A549 (cell line): ENCODE measurements at regions of chr9 and their contacts with region 1.

Region 1: DNA sequence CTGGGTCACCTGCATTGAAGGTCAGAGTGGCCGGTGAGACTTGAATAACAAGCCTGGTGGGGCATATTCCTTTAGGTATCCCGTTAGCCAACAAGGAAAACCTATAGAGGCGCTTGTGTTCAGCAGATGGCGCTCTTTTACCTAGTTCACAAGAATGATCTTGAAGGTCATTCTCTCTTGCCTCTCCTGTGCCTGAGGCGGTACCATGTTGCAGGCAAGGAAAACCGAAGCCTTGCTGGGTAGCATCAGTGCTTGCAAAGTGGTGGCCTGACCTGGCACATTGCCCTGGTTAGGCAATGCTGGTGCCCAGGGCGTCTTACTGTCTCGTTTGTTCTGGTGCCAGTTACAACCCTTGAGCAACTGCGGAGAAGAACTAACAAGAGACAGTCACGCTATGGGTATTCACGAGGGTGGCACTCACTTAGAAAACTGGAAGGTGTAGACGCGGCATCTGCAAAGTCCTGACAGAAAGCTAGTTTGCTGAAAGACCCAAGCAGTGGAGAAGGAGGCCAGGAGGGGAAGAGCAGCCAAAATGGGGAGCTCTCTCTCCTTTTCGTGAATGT is 56.7 kb downstream of the AOPEP start:
- DNase-seq: peak; percentile 80 to 100
- ATAC-seq: peak; percentile 96 to 100
- H3K4me3 ChIP-seq: no peak overlapping the region
- H3K27ac ChIP-seq: peak overlapping the region; percentile 86 to 91
- H3K4me1 ChIP-seq: peaks cover 60% of the 10 kb centered on the region
- CTCF ChIP-seq: peak; percentile 88
- EP300 ChIP-seq: peak; percentile 100
- POLR2A ChIP-seq: no peak
- RAD21 ChIP-seq: peak; percentile 98 to 100

Region 2: GRCh38 chr9:94672811-94673487 is 110.2 kb before region 1 on chr9:
- CTCF ChIA-PET with region 1: interaction called, 10 read pairs
- POLR2A ChIA-PET with region 1: interaction called, 3 read pairs
- DNase-seq: peak in 1 of 2 experiments; percentile 37
- ATAC-seq: no peak
- H3K4me3 ChIP-seq: no peak overlapping the region
- H3K27ac ChIP-seq: peak overlapping the region; percentile 37 to 70; a peak in 5 of 6 replicates
- H3K4me1 ChIP-seq: peaks cover 25% of the 10 kb centered on the region; the same call in 2 of the 3 replicates
- CTCF ChIP-seq: no peak
- EP300 ChIP-seq: no peak
- POLR2A ChIP-seq: no peak
- RAD21 ChIP-seq: no peak

Region 3: GRCh38 chr9:94847486-94847885 is 64.3 kb after region 1 on chr9:
- CTCF ChIA-PET with region 1: interaction called, 10 read pairs
- POLR2A ChIA-PET with region 1: no interaction called
- DNase-seq: no peak
- ATAC-seq: peak in 1 of 2 experiments; percentile 24; a peak in 3 of 6 replicates
- H3K4me3 ChIP-seq: no peak overlapping the region
- H3K27ac ChIP-seq: peak overlapping the region; percentile 51 to 78; a peak in 5 of 6 replicates
- H3K4me1 ChIP-seq: peaks cover 28% of the 10 kb centered on the region
- CTCF ChIP-seq: no peak
- EP300 ChIP-seq: no peak
- POLR2A ChIP-seq: no peak
- RAD21 ChIP-seq: no peak

Region 4: DNA sequence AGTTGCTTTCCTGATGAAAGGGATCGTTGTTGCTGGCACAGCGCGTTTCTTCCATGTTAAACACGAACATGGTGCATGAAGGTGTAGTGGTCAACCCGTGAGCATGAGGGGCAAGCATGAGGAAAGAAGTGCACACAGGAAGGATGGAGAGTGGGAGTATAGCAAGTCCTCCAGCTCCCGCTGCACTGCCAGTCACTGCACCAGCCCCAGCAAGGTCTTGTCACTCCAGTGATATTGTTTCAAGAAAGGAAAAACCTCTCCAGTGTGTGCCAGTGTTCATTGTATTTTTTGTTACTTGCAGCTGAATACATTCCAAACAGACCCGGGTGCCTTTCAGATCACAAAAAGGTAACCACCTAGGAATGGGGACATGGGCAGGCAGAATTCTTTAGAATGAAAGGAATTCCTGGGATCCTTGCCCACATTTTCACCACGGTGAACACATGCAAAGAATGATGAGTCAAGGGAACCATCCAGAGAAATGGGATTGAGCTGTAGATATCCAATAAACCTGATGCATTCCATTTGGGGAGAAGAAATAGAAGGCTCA is 129.6 kb after region 1 on chr9:
- CTCF ChIA-PET with region 1: interaction called, 64 read pairs
- POLR2A ChIA-PET with region 1: interaction called, 24 read pairs
- DNase-seq: peak; percentile 73 to 93
- ATAC-seq: peak; percentile 28 to 47
- H3K4me3 ChIP-seq: no peak overlapping the region
- H3K27ac ChIP-seq: peak overlapping the region; percentile 97 to 99
- H3K4me1 ChIP-seq: peaks cover 96% of the 10 kb centered on the region
- CTCF ChIP-seq: no peak
- EP300 ChIP-seq: peak; percentile 72 to 92; a peak in 3 of 5 replicates
- POLR2A ChIP-seq: no peak
- RAD21 ChIP-seq: peak; percentile 42 to 58; a peak in 4 of 5 replicates

Region 5: DNA sequence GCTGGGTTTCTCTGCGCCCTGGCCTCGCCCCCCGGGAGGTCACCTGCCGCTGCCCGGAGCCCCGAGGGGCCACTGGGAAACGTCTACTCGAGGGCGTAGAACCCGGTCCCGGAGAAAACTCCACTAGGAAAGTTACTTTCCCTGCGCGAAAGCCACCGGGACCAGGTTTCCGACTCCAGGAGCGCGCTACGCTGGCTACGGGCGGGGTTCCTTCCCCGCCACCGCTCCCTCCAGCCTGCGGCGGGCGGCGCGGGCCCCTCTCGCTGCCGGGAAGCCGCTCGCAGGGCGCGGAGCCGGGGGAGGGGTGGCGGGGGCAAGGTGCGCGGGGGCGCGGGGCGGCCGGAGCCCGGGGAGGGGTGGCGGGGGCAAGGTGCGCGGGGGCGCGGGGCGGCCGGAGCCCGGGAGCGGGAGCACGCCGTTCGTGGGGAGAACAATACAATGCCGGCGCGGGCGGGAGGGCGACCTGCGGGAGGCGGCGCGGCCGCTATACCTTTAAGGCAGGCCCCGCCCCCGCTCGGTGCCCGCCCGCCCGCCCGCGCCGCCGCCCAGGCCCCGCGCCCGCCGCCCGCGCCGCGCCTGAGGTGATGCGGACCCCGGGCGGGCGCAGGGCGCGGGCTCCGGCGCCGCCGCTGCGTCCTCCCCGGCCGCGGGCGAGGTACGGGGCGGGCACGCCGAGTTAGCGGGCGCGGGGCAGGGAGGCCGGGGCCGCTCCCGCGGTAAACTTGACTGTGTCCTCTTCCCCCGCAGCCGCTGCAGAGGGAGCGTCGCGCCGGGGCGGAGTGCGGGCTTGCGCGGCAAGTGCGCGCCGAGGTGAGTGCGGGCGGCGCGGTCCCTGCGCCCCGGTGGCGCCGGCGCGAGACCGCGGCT is 221.5 kb after region 1 on chr9:
- CTCF ChIA-PET with region 1: interaction called, 17 read pairs
- POLR2A ChIA-PET with region 1: interaction called, 17 read pairs
- DNase-seq: peak in 1 of 2 experiments; percentile 74
- ATAC-seq: peak; percentile 57 to 76
- H3K4me3 ChIP-seq: peak overlapping the region; percentile 87
- H3K27ac ChIP-seq: peak overlapping the region; percentile 99 to 100
- H3K4me1 ChIP-seq: peaks cover 44% of the 10 kb centered on the region
- CTCF ChIP-seq: no peak
- EP300 ChIP-seq: no peak; a peak in 1 of 5 replicates
- POLR2A ChIP-seq: peak; percentile 38; the same call in 1 of the 2 replicates
- RAD21 ChIP-seq: no peak; a peak in 1 of 5 replicates

Region 6: GRCh38 chr9:95048225-95049087 is 265.3 kb after region 1 on chr9:
- CTCF ChIA-PET with region 1: interaction called, 21 read pairs
- POLR2A ChIA-PET with region 1: interaction called, 7 read pairs
- DNase-seq: peak in 1 of 2 experiments; percentile 74
- ATAC-seq: peak; percentile 47 to 67
- H3K4me3 ChIP-seq: peak overlapping the region; percentile 57
- H3K27ac ChIP-seq: peak overlapping the region; percentile 84 to 87
- H3K4me1 ChIP-seq: peaks cover 59% of the 10 kb centered on the region
- CTCF ChIP-seq: no peak
- EP300 ChIP-seq: no peak
- POLR2A ChIP-seq: peak; percentile 53
- RAD21 ChIP-seq: no peak